Psoas muscle (tissue), 8 donors: ENCODE measurements at regions of chr13 and their contacts with region 1.

Region 1: DNA sequence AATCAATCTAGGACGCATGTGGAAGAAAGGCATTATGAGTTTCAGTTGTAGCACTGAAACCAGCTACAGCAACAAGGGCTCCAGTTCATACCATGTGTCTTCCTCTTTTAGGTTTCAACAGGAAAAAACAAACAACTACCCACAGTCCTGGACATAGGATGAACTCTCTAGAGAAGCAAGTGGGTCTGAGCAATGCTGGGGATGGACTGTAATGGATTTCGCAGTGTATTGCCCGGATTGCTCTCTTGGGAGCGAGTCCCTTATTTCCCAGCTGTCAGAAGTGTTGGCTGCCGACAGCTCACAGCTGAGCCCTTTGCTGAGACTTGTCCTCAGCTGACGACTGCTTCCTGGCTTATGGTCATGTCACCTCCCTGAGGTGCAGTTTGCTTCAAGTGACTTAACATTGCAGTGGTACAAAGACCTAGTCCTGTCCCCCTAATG is 12.1 kb upstream of the MYCBP2 start:
- DNase-seq: no peak
- ATAC-seq: peak; percentile 37 to 76 (median 65)
- H3K4me3 ChIP-seq: no peak overlapping the region
- H3K27ac ChIP-seq: no peak overlapping the region
- H3K4me1 ChIP-seq: no peaks in the 10 kb centered on the region
- H3K27me3 ChIP-seq: no peaks in the 10 kb centered on the region
- CTCF ChIP-seq: no peak

Region 2: DNA sequence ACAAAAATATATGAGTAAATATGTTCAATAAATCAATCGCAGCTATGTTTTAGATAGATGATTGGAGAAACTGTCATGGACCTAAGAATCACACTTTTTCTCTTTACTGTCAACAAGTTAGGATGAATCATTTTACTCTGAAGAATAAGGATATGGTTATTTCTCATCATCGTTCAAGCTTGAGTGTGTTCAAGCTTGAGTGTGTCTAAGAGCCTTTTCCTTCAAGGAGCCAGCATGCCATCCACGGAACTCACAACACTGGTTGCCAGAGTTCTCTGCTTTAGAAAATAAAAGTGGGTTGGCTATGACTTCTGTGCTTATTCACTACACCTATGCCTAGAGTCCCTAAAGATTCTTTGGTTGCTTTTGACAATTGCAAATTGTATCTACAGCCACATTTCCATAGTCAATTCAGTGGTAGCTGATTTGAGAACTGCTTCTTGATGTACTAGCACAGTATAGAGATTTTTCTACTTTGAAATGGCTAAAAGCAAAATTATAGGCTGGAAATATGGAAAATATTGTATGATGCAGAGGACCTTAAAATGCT is 138.4 kb after region 1 on chr13:
- intact Hi-C with region 1: loop called in 1 of 2 experiments (anchors 10 kb)
- DNase-seq: no peak
- ATAC-seq: peak in 1 of 4 donors; percentile 37
- H3K4me3 ChIP-seq: peak overlapping the region; percentile 63
- H3K27ac ChIP-seq: peak overlapping the region; percentile 46
- H3K4me1 ChIP-seq: peaks cover 7% of the 10 kb centered on the region
- H3K27me3 ChIP-seq: no peaks in the 10 kb centered on the region
- CTCF ChIP-seq: no peak